ENCODE measurements at regions of chr2 and their contacts with region 1.

Region 1: GRCh38 chr2:71385012-71385411 is 53.4 kb downstream of the ZNF638 start:
- DNase-seq: peak; percentile 58
- H3K4me3 ChIP-seq: no peak overlapping the region
- H3K27ac ChIP-seq: no peak overlapping the region
- H3K27me3 ChIP-seq: no peaks in the 10 kb centered on the region
- CTCF ChIP-seq: no peak

Region 2: DNA sequence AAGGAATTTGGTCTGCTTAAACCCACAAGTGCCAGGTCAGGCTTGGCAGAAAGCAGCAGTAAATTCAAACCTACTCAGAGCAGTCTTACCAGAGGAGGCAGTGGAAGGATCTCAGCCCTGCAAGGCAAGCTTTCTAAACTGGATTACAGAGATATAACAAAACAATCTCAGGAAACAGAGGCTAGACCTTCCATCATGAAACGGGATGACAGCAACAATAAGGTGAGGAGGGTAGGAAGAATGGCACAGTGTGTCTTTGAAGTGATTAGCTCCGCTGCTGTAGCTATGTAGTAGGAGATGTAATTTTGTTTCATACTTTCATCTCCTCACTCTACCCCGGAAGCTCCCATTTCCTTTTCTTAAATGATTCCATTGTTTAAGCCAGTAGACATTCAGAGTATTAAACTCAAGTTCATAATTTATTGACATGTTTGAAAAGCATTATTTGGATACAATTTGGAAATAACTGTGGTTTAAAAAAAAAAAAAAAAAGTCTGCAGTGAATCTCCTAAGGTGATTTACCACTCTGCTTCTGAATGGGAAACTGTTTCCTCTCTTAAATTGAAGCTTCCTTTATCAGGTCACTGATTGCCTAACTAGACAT is 38.9 kb after region 1 on chr2:
- CTCF ChIA-PET with region 1: no interaction called
- POLR2A ChIA-PET with region 1: interaction called, 21 read pairs
- DNase-seq: no peak
- H3K4me3 ChIP-seq: no peak overlapping the region
- H3K27ac ChIP-seq: no peak overlapping the region
- H3K27me3 ChIP-seq: no peaks in the 10 kb centered on the region
- CTCF ChIP-seq: no peak